ENCODE measurements at regions of chr11 and their contacts with region 1.

Region 1: DNA sequence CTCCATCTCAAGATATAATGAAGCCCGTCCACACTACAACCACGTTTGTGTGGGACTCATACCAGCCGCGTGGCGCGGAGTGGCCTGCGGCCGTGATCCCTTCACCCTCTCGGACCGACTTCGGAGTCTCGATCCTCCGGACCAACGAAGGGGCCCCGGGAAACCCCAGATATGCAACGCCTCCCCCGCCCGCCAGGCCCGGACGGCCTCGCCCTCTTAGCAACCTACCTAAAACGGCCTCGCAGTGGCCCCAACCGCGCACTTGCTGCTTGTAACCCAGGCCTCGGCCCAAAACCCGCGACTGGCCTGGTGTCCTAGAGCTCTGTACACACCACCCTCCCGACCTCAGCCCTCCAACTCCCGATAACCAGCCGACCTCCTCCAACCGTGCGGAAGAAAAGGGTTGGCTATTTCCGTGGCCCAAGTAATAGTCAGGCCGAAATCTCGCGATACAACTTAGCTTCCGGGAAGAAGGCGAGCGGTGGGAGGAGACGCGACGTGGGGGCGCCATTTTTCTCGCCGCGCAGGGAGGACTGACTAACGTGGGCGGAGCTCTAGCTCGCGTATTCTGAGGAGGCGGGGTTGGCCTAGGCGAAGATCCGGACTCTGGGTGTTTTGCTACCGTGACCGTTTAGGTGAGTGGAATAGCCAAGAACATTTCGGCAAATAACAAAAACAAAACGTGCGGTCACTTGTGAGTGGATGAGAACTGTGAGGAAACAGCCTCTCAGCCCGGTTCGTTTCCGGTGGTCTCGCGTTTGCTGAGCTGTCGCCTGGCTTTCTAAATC is at the starts of genes C11orf54 and TAF1D:
- DNase-seq: peak; percentile 96
- H3K4me3 ChIP-seq: peak within 1 kb of the TSS; percentile 70 to 86 (median 74)
- H3K27ac ChIP-seq: peak within 1 kb of the TSS; percentile 89
- H3K4me1 ChIP-seq: peaks cover 22% of the 10 kb centered on the region
- H3K27me3 ChIP-seq: no peaks in the 10 kb centered on the region
- CTCF ChIP-seq: no peak
- total RNA-seq, gene C11orf54: 8.2 to 10.2 TPM
- total RNA-seq, gene TAF1D: 167 to 198 TPM

Region 2: GRCh38 chr11:93196816-93197379 is 544.4 kb before region 1 on chr11:
- CTCF ChIA-PET with region 1: no interaction called
- dilution Hi-C with region 1: no loop called
- in situ Hi-C with region 1: no loop called
- intact Hi-C with region 1: no loop called
- DNase-seq: no peak
- H3K4me3 ChIP-seq: peak overlapping the region; percentile 78 to 92 (median 79)
- H3K27ac ChIP-seq: peak overlapping the region; percentile 98
- H3K4me1 ChIP-seq: no peaks in the 10 kb centered on the region
- H3K27me3 ChIP-seq: no peaks in the 10 kb centered on the region
- CTCF ChIP-seq: peak; percentile 35 to 47

Region 3: GRCh38 chr11:93662177-93662575 is 79.1 kb before region 1 on chr11:
- CTCF ChIA-PET with region 1: no interaction called
- dilution Hi-C with region 1: no loop called
- in situ Hi-C with region 1: no loop called
- intact Hi-C with region 1: loop called (anchors 5 kb)
- DNase-seq: no peak
- H3K4me3 ChIP-seq: peak overlapping the region; percentile 82 to 91 (median 85)
- H3K27ac ChIP-seq: peak overlapping the region; percentile 87
- H3K4me1 ChIP-seq: peaks cover 8% of the 10 kb centered on the region
- H3K27me3 ChIP-seq: no peaks in the 10 kb centered on the region
- CTCF ChIP-seq: no peak

Region 4: DNA sequence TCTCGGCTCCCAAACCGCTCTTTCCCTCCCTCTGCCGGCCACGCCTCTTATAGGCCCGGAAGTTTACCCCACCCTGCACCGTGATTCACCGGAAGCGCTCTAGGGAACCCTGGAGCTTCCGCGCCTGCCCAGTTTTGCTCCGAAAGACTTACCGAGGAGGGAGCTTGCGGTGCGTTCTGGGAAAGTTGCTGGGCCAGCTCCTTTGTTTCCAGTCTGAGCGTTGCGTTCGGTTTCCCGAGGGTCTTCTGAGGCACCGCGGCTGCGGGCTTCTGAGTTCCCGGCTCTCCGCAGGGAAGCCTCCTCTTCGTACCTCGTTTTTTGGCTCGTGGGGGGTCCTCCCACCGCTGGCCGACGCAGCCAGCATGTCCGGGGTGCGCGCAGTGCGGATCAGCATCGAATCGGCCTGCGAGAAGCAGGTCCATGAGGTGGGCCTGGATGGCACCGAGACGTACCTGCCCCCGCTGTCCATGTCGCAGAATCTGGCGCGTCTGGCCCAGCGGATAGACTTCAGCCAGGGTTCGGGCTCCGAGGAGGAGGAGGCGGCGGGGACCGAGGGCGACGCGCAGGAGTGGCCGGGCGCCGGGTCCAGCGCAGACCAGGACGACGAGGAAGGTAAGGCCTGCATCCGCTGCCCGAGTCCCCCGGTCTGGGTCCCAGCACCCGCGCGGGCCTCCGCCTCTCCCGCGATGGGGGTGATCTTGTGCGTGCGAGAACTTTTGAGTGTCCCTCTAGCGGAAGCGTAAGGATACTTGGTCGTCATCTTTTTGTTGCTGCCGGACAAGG is 43.1 kb after region 1 on chr11 and contains the start of gene MED17:
- CTCF ChIA-PET with region 1: interaction called, 4 read pairs
- dilution Hi-C with region 1: no loop called
- in situ Hi-C with region 1: loop called in 1 of 2 experiments (anchors 5 kb)
- intact Hi-C with region 1: loop called (anchors 1 kb)
- DNase-seq: peak; percentile 91
- H3K4me3 ChIP-seq: peak within 1 kb of the TSS; percentile 77 to 100 (median 80)
- H3K27ac ChIP-seq: peak within 1 kb of the TSS; percentile 86
- H3K4me1 ChIP-seq: peaks cover 10% of the 10 kb centered on the region
- H3K27me3 ChIP-seq: no peaks in the 10 kb centered on the region
- CTCF ChIP-seq: peak; percentile 24 to 59
- total RNA-seq, gene MED17: 27.8 to 30.2 TPM